Sigmoid colon (tissue), 7 donors: ENCODE measurements at regions of chr10 and their contacts with region 1.

Region 1: GRCh38 chr10:122953827-122954730 is at the start of gene C10orf88:
- DNase-seq: peak; percentile 99
- H3K4me3 ChIP-seq: peak within 1 kb of the TSS; percentile 68 to 86 (median 80)
- H3K27ac ChIP-seq: peak within 1 kb of the TSS; percentile 74 to 82 (median 76)
- H3K4me1 ChIP-seq: peaks cover 0 to 22% (median 19%) of the 10 kb centered on the region in 4 donors
- H3K27me3 ChIP-seq: no peaks in the 10 kb centered on the region
- CTCF ChIP-seq: no peak
- EP300 ChIP-seq: no peak
- POLR2A ChIP-seq: no peak
- total RNA-seq, gene C10orf88: 3.0 to 10.2 (median 4.8) TPM

Region 2: DNA sequence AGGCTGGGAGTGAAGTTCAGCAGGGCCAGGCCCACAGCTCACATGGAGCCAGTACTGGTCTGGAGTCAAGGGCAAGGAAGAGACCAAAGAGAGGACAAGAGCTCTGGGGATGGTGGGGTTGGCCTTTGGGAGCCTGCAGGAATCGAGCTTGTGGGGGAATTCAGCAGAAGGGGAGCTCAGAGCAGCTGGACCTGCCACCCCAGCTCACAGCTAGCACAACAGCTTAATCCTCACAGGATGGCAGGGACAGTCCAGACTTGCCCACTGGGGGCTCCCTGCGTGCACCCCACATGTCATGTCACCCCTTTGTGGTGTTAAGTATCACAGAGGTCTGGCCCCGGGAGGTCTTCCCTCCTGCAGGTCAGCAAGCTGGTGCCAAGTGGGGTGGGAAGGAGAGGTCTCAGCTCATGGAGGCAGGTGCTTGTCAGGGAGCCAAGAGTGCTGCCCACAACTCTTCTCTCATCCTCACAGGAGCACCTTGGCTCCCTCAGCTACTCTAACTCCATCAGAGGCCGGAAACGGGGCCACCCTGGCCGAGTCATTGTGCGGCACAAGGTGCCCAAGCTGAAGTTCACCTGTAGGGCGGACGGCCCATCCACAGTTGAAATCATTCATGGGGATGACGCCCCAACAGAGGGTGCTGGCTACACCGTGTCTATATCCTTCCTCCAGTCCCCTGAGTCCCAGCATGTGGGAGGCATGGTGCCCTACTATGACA is 130.9 kb before region 1 on chr10:
- intact Hi-C with region 1: no loop called
- DNase-seq: no peak
- H3K4me3 ChIP-seq: no peak overlapping the region
- H3K27ac ChIP-seq: no peak overlapping the region
- H3K4me1 ChIP-seq: no peaks in the 10 kb centered on the region
- H3K27me3 ChIP-seq: peaks cover 0 to 30% (median 10%) of the 10 kb centered on the region in 3 donors
- CTCF ChIP-seq: no peak
- EP300 ChIP-seq: no peak
- POLR2A ChIP-seq: no peak

Region 3: DNA sequence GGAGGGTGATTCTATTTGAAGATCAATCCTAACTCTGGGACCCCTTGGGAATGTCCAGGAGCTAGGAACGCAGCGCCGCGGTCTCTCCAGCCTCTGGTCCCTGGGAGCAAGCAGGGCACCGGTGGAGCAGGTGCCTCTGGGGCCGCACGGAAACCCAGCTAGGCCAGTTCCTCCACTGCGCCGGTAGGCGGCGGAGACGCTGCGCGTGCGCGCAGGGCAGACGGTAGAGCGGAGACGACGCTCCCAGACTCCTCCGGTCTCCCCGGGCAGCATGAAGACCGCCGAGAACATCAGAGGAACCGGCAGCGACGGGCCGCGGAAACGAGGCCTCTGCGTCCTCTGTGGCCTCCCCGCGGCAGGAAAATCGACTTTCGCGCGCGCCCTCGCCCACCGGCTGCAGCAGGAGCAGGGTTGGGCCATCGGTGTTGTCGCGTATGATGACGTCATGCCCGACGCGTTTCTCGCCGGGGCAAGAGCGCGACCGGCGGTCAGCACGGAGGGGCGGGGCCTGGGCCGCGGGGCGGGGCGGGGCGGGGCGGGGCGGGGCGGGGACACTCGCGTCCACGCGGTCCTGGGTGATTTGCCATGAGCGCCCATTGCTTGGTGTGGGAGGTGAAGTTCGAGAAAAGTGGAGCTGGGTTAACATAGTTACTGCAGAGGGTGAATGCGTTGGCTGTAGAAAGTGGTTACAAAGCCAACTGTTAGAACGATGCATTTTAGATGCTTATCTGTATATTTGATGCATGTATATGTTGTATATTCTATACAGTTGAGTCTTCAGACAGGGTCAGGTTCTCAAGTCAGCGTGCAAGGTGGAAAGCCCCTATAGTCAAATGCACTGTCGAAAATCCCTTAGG is 26.4 kb after region 1 on chr10 and contains the start of gene PSTK:
- intact Hi-C with region 1: loop called (anchors 1 kb)
- DNase-seq: peak; percentile 96
- H3K4me3 ChIP-seq: peak within 1 kb of the TSS; percentile 67 to 85 (median 76)
- H3K27ac ChIP-seq: peak within 1 kb of the TSS; percentile 89 to 96 (median 92)
- H3K4me1 ChIP-seq: peaks cover 0 to 14% (median 11%) of the 10 kb centered on the region in 4 donors
- H3K27me3 ChIP-seq: no peaks in the 10 kb centered on the region
- CTCF ChIP-seq: peak; percentile 95 to 98 (median 96)
- EP300 ChIP-seq: no peak
- POLR2A ChIP-seq: no peak
- total RNA-seq, gene PSTK: 1.6 to 3.6 (median 3.4) TPM